WTC11 (cell line): ENCODE measurements at regions of chr5 and their contacts with region 1.

Region 1: GRCh38 chr5:38809388-38810359 is 36.1 kb upstream of the OSMR start:
- DNase-seq: peak; percentile 81
- ATAC-seq: peak; percentile 97
- H3K4me3 Mint-ChIP-seq: no peak overlapping the region
- H3K27ac Mint-ChIP-seq: no peak overlapping the region
- H3K4me1 Mint-ChIP-seq: peaks cover 15% of the 10 kb centered on the region
- H3K27me3 Mint-ChIP-seq: peaks cover 4% of the 10 kb centered on the region; the same call in 1 of the 2 replicates
- CTCF ChIP-seq: peak; percentile 81

Region 2: GRCh38 chr5:38265546-38266179 is 544.0 kb before region 1 on chr5:
- CTCF ChIA-PET with region 1: interaction called, 13 read pairs
- POLR2A ChIA-PET with region 1: no interaction called
- DNase-seq: peak; percentile 84
- ATAC-seq: peak; percentile 98
- H3K4me3 Mint-ChIP-seq: peak overlapping the region; percentile 40
- H3K27ac Mint-ChIP-seq: no peak overlapping the region
- H3K4me1 Mint-ChIP-seq: 0 out of 2 replicates have a peak, but pooled peaks cover 4% of the 10 kb centered on the region
- H3K27me3 Mint-ChIP-seq: peaks cover 42% of the 10 kb centered on the region
- CTCF ChIP-seq: peak; percentile 73

Region 3: DNA sequence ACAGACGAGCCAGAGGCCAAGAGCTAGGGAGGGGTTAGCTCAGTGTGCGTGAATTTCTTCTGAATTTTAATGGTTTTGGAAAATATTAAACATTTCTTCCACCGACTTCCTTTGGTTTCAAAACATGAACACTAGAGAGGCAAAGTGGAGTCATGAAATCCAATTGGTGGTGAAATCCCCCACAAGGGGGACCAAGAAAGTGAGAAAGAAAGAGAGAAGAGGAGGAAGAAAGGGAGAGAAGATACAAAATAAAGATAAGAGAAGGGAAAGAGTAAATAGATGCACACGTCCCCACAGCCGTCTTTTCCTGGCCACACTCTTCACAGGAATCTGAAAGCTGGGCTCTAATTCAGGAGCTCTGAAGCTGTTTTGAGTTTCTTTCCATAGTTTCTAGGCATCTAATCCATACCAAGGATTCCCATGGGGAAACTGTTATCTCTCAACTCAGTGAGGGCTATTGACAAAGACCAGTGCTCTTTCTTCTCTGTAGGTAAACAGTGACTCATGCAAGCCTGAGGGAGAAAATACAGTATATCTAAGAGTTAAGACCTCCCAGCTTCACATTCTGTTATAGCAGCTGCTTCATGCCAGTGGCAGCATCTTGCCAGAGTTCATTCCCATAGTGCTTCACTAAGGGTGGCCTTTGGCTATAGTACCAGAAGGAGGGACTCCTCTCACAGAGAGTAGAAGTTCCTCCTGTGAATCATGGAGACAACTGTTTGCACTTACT is 137.4 kb before region 1 on chr5:
- CTCF ChIA-PET with region 1: interaction called, 12 read pairs
- POLR2A ChIA-PET with region 1: no interaction called
- DNase-seq: no peak
- ATAC-seq: no peak
- H3K4me3 Mint-ChIP-seq: no peak overlapping the region
- H3K27ac Mint-ChIP-seq: no peak overlapping the region
- H3K4me1 Mint-ChIP-seq: no peaks in the 10 kb centered on the region
- H3K27me3 Mint-ChIP-seq: no peaks in the 10 kb centered on the region
- CTCF ChIP-seq: no peak